ENCODE measurements at regions of chr6 and their contacts with region 1.

Region 1: GRCh38 chr6:26097268-26097875 is 10.1 kb downstream of the HFE start:
- DNase-seq: peak; percentile 72
- H3K4me3 ChIP-seq: no peak overlapping the region
- H3K27ac ChIP-seq: no peak overlapping the region
- H3K4me1 ChIP-seq: no peaks in the 10 kb centered on the region
- H3K27me3 ChIP-seq: no peaks in the 10 kb centered on the region
- CTCF ChIP-seq: peak; percentile 78

Region 2: DNA sequence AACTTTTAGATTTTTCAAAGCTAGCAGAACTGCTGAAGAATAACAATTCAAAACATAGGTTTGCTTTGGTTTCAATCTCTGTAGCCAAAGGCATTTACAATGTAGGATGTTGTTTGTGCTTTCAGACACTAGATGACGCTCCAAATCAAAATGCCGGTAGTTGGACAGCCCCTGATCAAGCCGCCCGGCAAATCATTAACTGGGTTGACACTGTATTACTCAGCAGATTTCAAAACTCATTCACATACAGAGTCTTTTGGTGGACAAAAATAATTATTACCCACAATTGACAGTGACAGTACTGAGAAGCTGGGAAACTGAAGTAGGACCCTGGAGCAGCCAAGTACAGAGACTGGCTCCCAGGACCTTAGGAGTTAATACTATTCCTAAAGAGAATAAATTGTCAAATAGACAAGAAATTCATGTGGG is 31.4 kb before region 1 on chr6:
- intact Hi-C with region 1: loop called (anchors 2 kb)
- DNase-seq: peak; percentile 81
- H3K4me3 ChIP-seq: no peak overlapping the region
- H3K27ac ChIP-seq: no peak overlapping the region
- H3K4me1 ChIP-seq: no peaks in the 10 kb centered on the region
- H3K27me3 ChIP-seq: no peaks in the 10 kb centered on the region
- CTCF ChIP-seq: peak; percentile 86

Measured in colonic mucosa (tissue), 4 donors.